Activated CD8-positive, alpha-beta T cell treated with anti-CD3 and anti-CD28 coated beads for 36 hours (primary cell): ENCODE measurements at regions of chr12 and their contacts with region 1.

Region 1: GRCh38 chr12:121786441-121786825 is 7.1 kb downstream of the RHOF start:
- DNase-seq: peak; percentile 66
- ATAC-seq: no peak
- H3K4me3 Mint-ChIP-seq: peak overlapping the region; percentile 58
- H3K27ac Mint-ChIP-seq: peak overlapping the region; percentile 100
- H3K4me1 Mint-ChIP-seq: peaks cover 79% of the 10 kb centered on the region
- H3K27me3 Mint-ChIP-seq: no peaks in the 10 kb centered on the region
- CTCF ChIP-seq: no peak

Region 2: GRCh38 chr12:121499929-121500793 is 286.3 kb before region 1 on chr12:
- CTCF ChIA-PET with region 1: no interaction called
- POLR2A ChIA-PET with region 1: no interaction called
- intact Hi-C with region 1: no loop called
- DNase-seq: peak; percentile 80
- ATAC-seq: peak; percentile 78
- H3K4me3 Mint-ChIP-seq: no peak overlapping the region
- H3K27ac Mint-ChIP-seq: no peak overlapping the region
- H3K4me1 Mint-ChIP-seq: peaks cover 17% of the 10 kb centered on the region
- H3K27me3 Mint-ChIP-seq: no peaks in the 10 kb centered on the region
- CTCF ChIP-seq: peak; percentile 99

Region 3: GRCh38 chr12:121802846-121803630 is 16.6 kb after region 1 on chr12:
- CTCF ChIA-PET with region 1: interaction called, 698 read pairs
- POLR2A ChIA-PET with region 1: interaction called, 683 read pairs
- intact Hi-C with region 1: no loop called
- DNase-seq: peak; percentile 97
- ATAC-seq: peak; percentile 60
- H3K4me3 Mint-ChIP-seq: peak overlapping the region; percentile 83
- H3K27ac Mint-ChIP-seq: peak overlapping the region; percentile 99
- H3K4me1 Mint-ChIP-seq: peaks cover 26% of the 10 kb centered on the region
- H3K27me3 Mint-ChIP-seq: no peaks in the 10 kb centered on the region
- CTCF ChIP-seq: no peak